Left cardiac atrium (tissue), 4 donors: ENCODE measurements at regions of chr9 and their contacts with region 1.

Region 1: DNA sequence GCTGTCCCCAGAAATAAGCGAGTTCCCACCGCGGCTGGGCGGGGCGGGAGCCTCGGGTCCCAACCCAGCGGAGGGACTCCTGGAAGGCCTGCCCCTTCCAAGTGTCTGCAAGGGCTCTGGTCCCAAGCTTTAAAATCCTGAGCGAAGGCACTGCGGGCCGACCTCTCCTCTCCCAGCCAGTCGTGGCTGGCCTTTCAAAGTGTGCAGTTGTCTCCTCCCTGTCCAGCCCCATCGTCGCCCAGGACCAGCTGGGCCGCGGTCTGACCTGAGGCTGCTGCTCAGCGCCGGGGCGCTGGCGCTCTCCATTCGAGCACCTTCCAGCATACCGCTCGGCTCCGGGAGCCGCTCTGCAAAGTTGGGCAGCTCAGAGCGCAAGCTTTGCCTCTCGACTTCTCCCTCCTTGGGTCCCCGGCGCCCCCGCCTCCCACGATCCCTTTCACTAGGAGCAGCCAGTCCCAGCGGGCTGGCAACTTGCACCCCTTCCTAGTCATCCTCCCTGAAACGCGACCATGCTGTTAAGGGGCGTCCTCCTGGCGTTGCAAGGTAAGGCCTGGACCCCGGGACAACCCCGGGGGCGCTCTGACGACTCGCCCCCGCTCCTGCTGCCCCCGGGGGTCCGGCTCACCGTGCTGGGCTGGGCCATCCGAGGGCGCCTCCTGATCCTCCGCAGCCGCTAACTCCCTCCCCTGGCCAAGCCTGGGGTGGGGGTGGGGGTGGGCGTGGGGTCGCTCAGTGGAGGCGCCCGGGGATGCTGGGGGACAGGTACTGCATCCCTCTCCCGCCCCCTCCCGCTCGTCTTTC is at the start of gene MAMDC2:
- DNase-seq: peak; percentile 58
- ATAC-seq: peak; percentile 71 to 84
- total RNA-seq, gene MAMDC2: 12.3 to 19.6 TPM

Region 2: GRCh38 chr9:70093944-70094343 is 50.1 kb after region 1 on chr9:
- intact Hi-C with region 1: loop called in 1 of 2 experiments (anchors 10 kb)
- DNase-seq: no peak
- ATAC-seq: peak in 1 of 2 donors; percentile 74